A673 (cell line): ENCODE measurements at regions of chr11 and their contacts with region 1.

Region 1: GRCh38 chr11:47355283-47356128 is 3.0 kb upstream of the MYBPC3 start:
- DNase-seq: peak; percentile 99
- H3K4me3 ChIP-seq: peak overlapping the region; percentile 50
- H3K27ac ChIP-seq: peak overlapping the region; percentile 18
- H3K4me1 ChIP-seq: peaks cover 5% of the 10 kb centered on the region
- H3K27me3 ChIP-seq: no peaks in the 10 kb centered on the region
- CTCF ChIP-seq: peak; percentile 100

Region 2: DNA sequence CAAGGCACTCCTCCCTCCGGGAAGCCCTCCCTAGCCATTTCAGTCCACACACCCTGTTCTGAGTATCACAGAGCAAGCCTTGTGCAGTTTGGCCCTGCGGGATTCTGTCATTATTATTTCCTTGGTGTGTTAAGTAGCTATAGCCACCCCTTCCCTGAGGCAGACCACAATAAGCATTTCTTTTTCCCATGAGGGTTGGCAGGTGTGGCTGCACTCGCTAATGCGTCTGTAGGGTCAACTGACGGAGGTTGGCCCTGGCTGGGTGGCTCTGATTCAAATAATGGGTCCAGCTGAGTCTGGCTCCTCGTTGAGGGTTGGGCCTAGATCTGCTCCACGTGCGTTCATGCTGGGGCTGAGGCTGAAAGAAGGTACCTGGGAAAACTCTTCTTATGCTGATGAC is 631.4 kb before region 1 on chr11:
- CTCF ChIA-PET with region 1: no interaction called
- POLR2A ChIA-PET with region 1: no interaction called
- intact Hi-C with region 1: no loop called
- DNase-seq: no peak
- H3K4me3 ChIP-seq: no peak overlapping the region
- H3K27ac ChIP-seq: no peak overlapping the region
- H3K4me1 ChIP-seq: no peaks in the 10 kb centered on the region
- H3K27me3 ChIP-seq: no peaks in the 10 kb centered on the region
- CTCF ChIP-seq: no peak

Region 3: GRCh38 chr11:46889689-46890475 is 465.6 kb before region 1 on chr11:
- CTCF ChIA-PET with region 1: interaction called, 3 read pairs
- POLR2A ChIA-PET with region 1: no interaction called
- intact Hi-C with region 1: loop called (anchors 1 kb)
- DNase-seq: peak; percentile 92
- H3K4me3 ChIP-seq: no peak overlapping the region
- H3K27ac ChIP-seq: no peak overlapping the region
- H3K4me1 ChIP-seq: no peaks in the 10 kb centered on the region
- H3K27me3 ChIP-seq: no peaks in the 10 kb centered on the region
- CTCF ChIP-seq: peak; percentile 100

Region 4: GRCh38 chr11:47204637-47204989 is 150.9 kb before region 1 on chr11:
- CTCF ChIA-PET with region 1: no interaction called
- POLR2A ChIA-PET with region 1: no interaction called
- intact Hi-C with region 1: no loop called
- DNase-seq: peak; percentile 55
- H3K4me3 ChIP-seq: no peak overlapping the region
- H3K27ac ChIP-seq: no peak overlapping the region
- H3K4me1 ChIP-seq: no peaks in the 10 kb centered on the region
- H3K27me3 ChIP-seq: no peaks in the 10 kb centered on the region
- CTCF ChIP-seq: no peak

Region 5: DNA sequence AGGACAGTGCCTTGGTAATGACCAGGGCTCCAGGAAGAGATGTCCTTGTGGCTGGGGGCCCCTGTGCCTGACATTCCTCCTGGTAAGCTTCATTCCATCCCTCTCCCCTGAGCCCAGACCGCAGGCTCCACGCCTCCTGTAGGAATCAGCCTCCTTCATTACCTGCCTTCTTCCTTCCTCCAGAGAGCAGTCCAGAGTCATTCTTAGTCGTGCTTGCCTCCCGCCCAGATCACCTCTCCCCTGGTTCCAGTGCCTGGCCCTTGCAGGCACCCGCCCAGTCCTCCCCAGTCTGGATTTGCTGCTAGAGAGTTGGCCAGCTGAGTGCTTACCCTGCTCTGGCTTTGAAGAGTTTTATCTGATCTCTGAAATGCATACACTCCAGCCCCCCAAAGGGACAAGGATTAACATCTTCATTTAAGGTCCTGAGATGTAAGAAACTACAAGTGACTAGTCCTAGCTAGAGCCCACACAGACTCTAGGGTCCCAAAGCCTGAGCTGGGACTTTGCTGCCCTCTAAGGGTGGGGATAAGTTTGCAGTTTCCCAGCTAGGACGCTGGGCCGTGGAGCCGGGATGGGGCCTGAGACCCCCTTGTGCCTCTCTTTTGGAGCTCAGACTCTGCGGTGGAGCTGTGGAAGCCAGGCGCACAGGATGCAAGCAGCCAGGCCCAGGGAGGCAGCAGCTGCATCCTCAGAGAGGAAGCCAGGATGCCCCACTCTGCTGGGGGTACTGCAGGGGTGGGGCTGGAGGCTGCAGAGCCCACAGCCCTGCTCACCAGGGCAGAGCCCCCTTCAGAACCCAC is 96.1 kb before region 1 on chr11:
- CTCF ChIA-PET with region 1: interaction called, 5 read pairs
- POLR2A ChIA-PET with region 1: no interaction called
- intact Hi-C with region 1: loop called (anchors 2 kb)
- DNase-seq: peak; percentile 79
- H3K4me3 ChIP-seq: no peak overlapping the region
- H3K27ac ChIP-seq: no peak overlapping the region
- H3K4me1 ChIP-seq: peaks cover 23% of the 10 kb centered on the region
- H3K27me3 ChIP-seq: no peaks in the 10 kb centered on the region
- CTCF ChIP-seq: peak; percentile 87

Region 6: GRCh38 chr11:47289856-47290255 is 65.7 kb before region 1 on chr11:
- CTCF ChIA-PET with region 1: no interaction called
- POLR2A ChIA-PET with region 1: no interaction called
- intact Hi-C with region 1: no loop called
- DNase-seq: no peak
- H3K4me3 ChIP-seq: no peak overlapping the region
- H3K27ac ChIP-seq: no peak overlapping the region
- H3K4me1 ChIP-seq: no peaks in the 10 kb centered on the region
- H3K27me3 ChIP-seq: no peaks in the 10 kb centered on the region
- CTCF ChIP-seq: no peak

Region 7: GRCh38 chr11:48034926-48035871 is 679.7 kb after region 1 on chr11:
- CTCF ChIA-PET with region 1: interaction called, 11 read pairs
- POLR2A ChIA-PET with region 1: no interaction called
- intact Hi-C with region 1: no loop called
- DNase-seq: no peak
- H3K4me3 ChIP-seq: no peak overlapping the region
- H3K27ac ChIP-seq: no peak overlapping the region
- H3K4me1 ChIP-seq: peaks cover under 1% of the 10 kb centered on the region
- H3K27me3 ChIP-seq: no peaks in the 10 kb centered on the region
- CTCF ChIP-seq: no peak